SK-N-SH (cell line): ENCODE measurements at regions of chr11 and their contacts with region 1.

Region 1: DNA sequence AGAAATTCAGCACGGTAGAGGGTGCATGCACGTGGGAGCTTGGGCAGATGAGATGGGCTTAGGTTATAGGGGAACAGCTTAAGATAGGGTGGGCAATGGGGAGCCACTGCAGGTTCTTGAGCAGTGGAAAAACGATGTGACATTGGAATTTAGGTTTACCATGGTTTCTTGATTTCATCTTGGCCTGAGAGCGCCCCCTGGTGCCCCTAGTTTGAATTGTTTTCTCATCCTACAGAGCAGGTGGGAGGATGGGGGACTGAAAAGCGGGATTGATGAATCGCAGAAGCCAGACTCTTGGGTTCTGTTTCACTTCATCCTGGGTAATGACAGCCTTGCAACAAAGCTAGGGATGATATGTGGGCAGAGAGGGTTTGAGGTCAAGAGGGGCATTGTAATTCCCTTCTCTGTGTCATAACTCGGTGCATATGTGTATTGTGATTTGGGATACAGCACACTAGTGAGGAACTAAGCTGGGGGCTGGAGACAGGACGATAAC is 6.7 kb upstream of the MCAM start:
- DNase-seq: peak; percentile 86
- H3K4me3 ChIP-seq: peak overlapping the region in 1 of 2 experiments; percentile 31; a peak in 1 of 4 replicates
- H3K27ac ChIP-seq: no peak overlapping the region
- H3K4me1 ChIP-seq: peaks cover 0 to 11% of the 10 kb centered on the region in 2 experiments; a peak in 1 of 4 replicates
- H3K27me3 ChIP-seq: no peaks in the 10 kb centered on the region
- CTCF ChIP-seq: peak; percentile 83
- EP300 ChIP-seq: peak in 1 of 2 experiments; percentile 69; a peak in 2 of 4 replicates
- RAD21 ChIP-seq: peak; percentile 85

Region 2: GRCh38 chr11:119144825-119145486 is 178.6 kb before region 1 on chr11:
- CTCF ChIA-PET with region 1: interaction called, 14 read pairs
- POLR2A ChIA-PET with region 1: no interaction called
- DNase-seq: peak; percentile 93
- H3K4me3 ChIP-seq: no peak overlapping the region
- H3K27ac ChIP-seq: no peak overlapping the region
- H3K4me1 ChIP-seq: peaks cover 0 to 13% of the 10 kb centered on the region in 2 experiments; a peak in 1 of 4 replicates
- H3K27me3 ChIP-seq: no peaks in the 10 kb centered on the region; the same call in 1 of the 2 replicates
- CTCF ChIP-seq: peak; percentile 60
- EP300 ChIP-seq: no peak
- RAD21 ChIP-seq: peak; percentile 68

Region 3: GRCh38 chr11:119205574-119206510 is 117.7 kb before region 1 on chr11 and contains the start of gene CBL:
- CTCF ChIA-PET with region 1: interaction called, 33 read pairs
- POLR2A ChIA-PET with region 1: no interaction called
- DNase-seq: peak; percentile 98
- H3K4me3 ChIP-seq: peak within 1 kb of the TSS; percentile 78 to 99
- H3K27ac ChIP-seq: peak within 1 kb of the TSS; percentile 90
- H3K4me1 ChIP-seq: peaks cover 5 to 7% of the 10 kb centered on the region in 2 experiments; a peak in 3 of 4 replicates
- H3K27me3 ChIP-seq: no peaks in the 10 kb centered on the region
- CTCF ChIP-seq: peak; percentile 78
- EP300 ChIP-seq: peak in 1 of 2 experiments; percentile 46; a peak in 1 of 4 replicates
- RAD21 ChIP-seq: peak; percentile 57
- polyA plus RNA-seq, gene CBL: 9.5 and 10.4 TPM in 2 replicates

Region 4: DNA sequence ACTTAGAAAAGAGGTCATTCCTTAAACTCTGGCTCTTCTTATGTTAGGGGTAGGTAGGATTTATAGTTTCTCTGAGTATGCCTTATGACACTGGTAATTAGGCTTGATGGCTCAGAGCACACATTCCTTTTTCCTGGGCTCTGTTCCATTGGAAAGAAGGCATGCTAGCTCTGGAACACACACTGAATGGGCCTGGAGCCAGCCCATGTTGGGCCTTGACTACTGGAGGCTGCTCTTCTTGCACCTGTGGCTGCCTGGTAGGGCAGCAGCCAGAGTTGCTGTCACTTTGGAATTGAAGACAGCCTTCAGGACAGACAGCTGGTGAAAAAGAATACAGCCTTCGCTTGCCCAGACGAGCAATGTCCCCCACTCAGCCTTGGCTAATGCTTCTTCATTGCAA is 24.9 kb before region 1 on chr11:
- CTCF ChIA-PET with region 1: interaction called, 15 read pairs
- POLR2A ChIA-PET with region 1: no interaction called
- DNase-seq: no peak
- H3K4me3 ChIP-seq: no peak overlapping the region
- H3K27ac ChIP-seq: no peak overlapping the region
- H3K4me1 ChIP-seq: peaks cover 0 to 3% of the 10 kb centered on the region in 2 experiments; a peak in 2 of 4 replicates
- H3K27me3 ChIP-seq: no peaks in the 10 kb centered on the region
- CTCF ChIP-seq: no peak
- EP300 ChIP-seq: no peak
- RAD21 ChIP-seq: no peak

Region 5: GRCh38 chr11:119356349-119357031 is 32.9 kb after region 1 on chr11:
- CTCF ChIA-PET with region 1: interaction called, 12 read pairs
- POLR2A ChIA-PET with region 1: no interaction called
- DNase-seq: peak; percentile 95
- H3K4me3 ChIP-seq: peak overlapping the region; percentile 42 to 79
- H3K27ac ChIP-seq: peak overlapping the region in 1 of 2 experiments; percentile 26; a peak in 1 of 4 replicates
- H3K4me1 ChIP-seq: peaks cover 8 to 22% of the 10 kb centered on the region in 2 experiments; a peak in 3 of 4 replicates
- H3K27me3 ChIP-seq: no peaks in the 10 kb centered on the region
- CTCF ChIP-seq: peak; percentile 96
- EP300 ChIP-seq: no peak
- RAD21 ChIP-seq: peak; percentile 78

Region 6: DNA sequence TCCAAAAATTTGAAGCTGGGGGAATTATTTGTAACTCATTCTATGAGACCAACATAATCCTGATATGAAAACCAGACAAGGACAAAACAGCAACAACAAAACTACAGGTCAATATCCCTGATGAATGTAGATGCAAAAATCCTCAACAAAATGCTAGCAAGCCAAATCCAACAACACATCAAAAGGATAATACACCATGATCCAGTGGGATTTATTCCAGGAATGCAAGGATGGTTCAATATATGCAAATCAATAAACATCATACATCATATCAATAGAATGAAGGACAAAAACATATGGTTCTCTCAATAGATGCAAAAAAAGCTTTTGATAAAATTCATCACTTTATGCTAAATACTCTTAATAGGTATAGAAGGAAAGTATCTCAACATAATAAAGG is 77.3 kb after region 1 on chr11:
- CTCF ChIA-PET with region 1: no interaction called
- POLR2A ChIA-PET with region 1: no interaction called
- DNase-seq: no peak
- H3K4me3 ChIP-seq: no peak overlapping the region
- H3K27ac ChIP-seq: no peak overlapping the region
- H3K4me1 ChIP-seq: no peaks in the 10 kb centered on the region
- H3K27me3 ChIP-seq: no peaks in the 10 kb centered on the region
- CTCF ChIP-seq: no peak
- EP300 ChIP-seq: no peak
- RAD21 ChIP-seq: no peak

Region 7: GRCh38 chr11:119560291-119560690 is 236.7 kb after region 1 on chr11:
- CTCF ChIA-PET with region 1: no interaction called
- POLR2A ChIA-PET with region 1: no interaction called
- DNase-seq: no peak
- H3K4me3 ChIP-seq: no peak overlapping the region
- H3K27ac ChIP-seq: no peak overlapping the region
- H3K4me1 ChIP-seq: no peaks in the 10 kb centered on the region
- H3K27me3 ChIP-seq: no peaks in the 10 kb centered on the region
- CTCF ChIP-seq: no peak
- EP300 ChIP-seq: no peak
- RAD21 ChIP-seq: no peak

Region 8: DNA sequence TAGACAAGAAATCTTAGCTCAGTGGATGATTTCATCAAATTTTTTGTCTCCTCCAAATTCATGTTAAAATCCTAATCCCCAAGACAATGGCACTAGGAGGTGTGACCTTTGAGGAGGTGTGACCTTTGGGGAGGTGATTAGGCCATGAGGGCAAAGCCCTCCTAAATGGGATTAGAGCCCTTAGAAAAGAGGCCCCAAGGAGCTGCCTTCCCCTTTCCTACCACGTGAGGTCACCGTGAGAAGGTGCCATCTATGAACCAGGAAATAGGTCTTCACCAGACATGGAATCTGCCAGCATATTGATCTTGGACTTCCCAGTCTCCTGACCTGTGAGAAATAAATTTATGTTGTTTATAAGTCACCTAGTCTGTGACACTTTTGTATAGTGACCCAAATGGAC is 675.6 kb after region 1 on chr11:
- CTCF ChIA-PET with region 1: no interaction called
- POLR2A ChIA-PET with region 1: no interaction called
- DNase-seq: no peak
- H3K4me3 ChIP-seq: no peak overlapping the region
- H3K27ac ChIP-seq: no peak overlapping the region
- H3K4me1 ChIP-seq: peaks cover 0 to 35% of the 10 kb centered on the region in 2 experiments; a peak in 2 of 4 replicates
- H3K27me3 ChIP-seq: peaks cover 5% of the 10 kb centered on the region; the same call in 1 of the 2 replicates
- CTCF ChIP-seq: peak; percentile 33
- EP300 ChIP-seq: no peak
- RAD21 ChIP-seq: no peak